Caco-2 (cell line): ENCODE measurements at regions of chr3 and their contacts with region 1.

Region 1: GRCh38 chr3:119559441-119559963 is at the start of gene CD80:
- DNase-seq: peak; percentile 57 to 59
- H3K4me3 ChIP-seq: no peak within 1 kb of the TSS
- H3K4me3 Mint-ChIP-seq: no peak within 1 kb of the TSS
- H3K27ac Mint-ChIP-seq: no peak within 1 kb of the TSS
- H3K4me1 ChIP-seq: no peaks in the 10 kb centered on the region
- H3K4me1 Mint-ChIP-seq: peaks cover 7% of the 10 kb centered on the region
- H3K27me3 ChIP-seq: no peaks in the 10 kb centered on the region; the same call in 1 of the 2 replicates
- H3K27me3 Mint-ChIP-seq: peaks cover 18% of the 10 kb centered on the region
- CTCF ChIP-seq: peak in 1 of 2 experiments; percentile 56
- total RNA-seq, gene CD80: not detected in 2 replicates

Region 2: GRCh38 chr3:119683421-119683820 is 123.9 kb after region 1 on chr3:
- CTCF ChIA-PET with region 1: interaction called, 11 read pairs
- POLR2A ChIA-PET with region 1: no interaction called
- intact Hi-C with region 1: no loop called
- DNase-seq: no peak
- H3K4me3 ChIP-seq: no peak overlapping the region
- H3K4me3 Mint-ChIP-seq: no peak overlapping the region
- H3K27ac Mint-ChIP-seq: no peak overlapping the region
- H3K4me1 ChIP-seq: no peaks in the 10 kb centered on the region
- H3K4me1 Mint-ChIP-seq: no peaks in the 10 kb centered on the region
- H3K27me3 ChIP-seq: no peaks in the 10 kb centered on the region
- H3K27me3 Mint-ChIP-seq: no peaks in the 10 kb centered on the region
- CTCF ChIP-seq: no peak